ENCODE measurements at regions of chr6 and their contacts with region 1.

Region 1: DNA sequence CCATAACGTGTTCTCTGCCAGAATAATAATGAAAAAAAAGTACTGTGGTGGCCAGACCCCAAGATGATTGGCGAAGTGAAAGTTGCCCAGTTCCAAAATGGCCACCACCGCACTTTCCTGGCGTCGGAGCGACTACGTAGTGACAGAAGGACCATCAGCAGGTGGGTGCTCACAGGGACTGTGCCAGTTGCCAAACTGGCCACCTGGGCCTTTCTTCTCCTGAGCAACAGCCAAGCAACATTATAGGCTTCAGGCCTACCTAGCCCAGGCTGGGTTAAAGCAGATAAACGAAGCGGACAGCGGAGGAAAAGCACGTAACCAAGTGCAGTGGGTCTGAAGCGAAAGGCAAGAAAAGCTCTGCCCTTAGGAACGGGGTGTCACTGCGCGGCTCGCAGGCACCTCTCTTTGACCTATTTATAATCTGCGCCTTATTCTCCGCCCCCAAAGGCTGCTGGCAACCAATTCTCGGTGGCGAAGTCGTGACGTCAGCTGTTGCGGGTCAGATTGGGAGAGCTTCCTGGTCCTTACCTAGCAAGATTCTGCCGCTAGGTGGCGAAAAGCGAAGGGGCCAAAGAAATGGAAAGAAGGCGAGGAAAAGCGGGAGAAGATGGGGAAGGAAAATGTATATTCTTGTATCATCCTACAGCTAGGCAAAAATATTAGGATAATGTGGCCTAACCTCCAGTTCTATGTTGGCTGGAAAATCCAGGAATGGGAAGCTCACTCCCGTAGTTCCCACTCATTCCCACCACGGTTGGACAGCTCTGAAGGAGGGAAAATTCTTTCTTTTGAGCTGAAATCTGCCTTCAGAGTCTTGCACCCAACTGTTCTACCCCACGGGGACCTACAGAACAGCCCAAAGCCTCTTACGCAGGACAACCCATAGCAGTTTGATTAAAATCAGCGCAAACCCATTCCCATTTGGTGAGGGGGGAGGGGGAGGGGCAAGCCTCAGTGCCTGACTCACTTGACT is 6.9 kb upstream of the MOG start:
- DNase-seq: peak; percentile 92 to 99
- H3K4me3 ChIP-seq: peak overlapping the region; percentile 55 to 67
- H3K27ac ChIP-seq: peak overlapping the region; percentile 94 to 95
- H3K4me1 ChIP-seq: peaks cover 0 to 2% of the 10 kb centered on the region in 2 donors
- H3K27me3 ChIP-seq: no peaks in the 10 kb centered on the region
- CTCF ChIP-seq: peak; percentile 76 to 92 (median 85)

Region 2: GRCh38 chr6:29632789-29633533 is 17.0 kb before region 1 on chr6 and contains the start of gene GABBR1:
- intact Hi-C with region 1: loop called (anchors 1 kb)
- DNase-seq: peak; percentile 42 to 94
- H3K4me3 ChIP-seq: peak within 1 kb of the TSS; percentile 77 to 81
- H3K27ac ChIP-seq: peak within 1 kb of the TSS; percentile 79 to 81
- H3K4me1 ChIP-seq: peaks cover 8 to 17% of the 10 kb centered on the region in 2 donors
- H3K27me3 ChIP-seq: no peaks in the 10 kb centered on the region
- CTCF ChIP-seq: no peak
- total RNA-seq, gene GABBR1: 166 TPM

Region 3: GRCh38 chr6:29685718-29686326 is 35.8 kb after region 1 on chr6:
- intact Hi-C with region 1: loop called (anchors 2 kb)
- DNase-seq: no peak
- H3K4me3 ChIP-seq: no peak overlapping the region
- H3K27ac ChIP-seq: no peak overlapping the region
- H3K4me1 ChIP-seq: no peaks in the 10 kb centered on the region
- H3K27me3 ChIP-seq: no peaks in the 10 kb centered on the region
- CTCF ChIP-seq: peak in 1 of 3 experiments; percentile 32

Region 4: DNA sequence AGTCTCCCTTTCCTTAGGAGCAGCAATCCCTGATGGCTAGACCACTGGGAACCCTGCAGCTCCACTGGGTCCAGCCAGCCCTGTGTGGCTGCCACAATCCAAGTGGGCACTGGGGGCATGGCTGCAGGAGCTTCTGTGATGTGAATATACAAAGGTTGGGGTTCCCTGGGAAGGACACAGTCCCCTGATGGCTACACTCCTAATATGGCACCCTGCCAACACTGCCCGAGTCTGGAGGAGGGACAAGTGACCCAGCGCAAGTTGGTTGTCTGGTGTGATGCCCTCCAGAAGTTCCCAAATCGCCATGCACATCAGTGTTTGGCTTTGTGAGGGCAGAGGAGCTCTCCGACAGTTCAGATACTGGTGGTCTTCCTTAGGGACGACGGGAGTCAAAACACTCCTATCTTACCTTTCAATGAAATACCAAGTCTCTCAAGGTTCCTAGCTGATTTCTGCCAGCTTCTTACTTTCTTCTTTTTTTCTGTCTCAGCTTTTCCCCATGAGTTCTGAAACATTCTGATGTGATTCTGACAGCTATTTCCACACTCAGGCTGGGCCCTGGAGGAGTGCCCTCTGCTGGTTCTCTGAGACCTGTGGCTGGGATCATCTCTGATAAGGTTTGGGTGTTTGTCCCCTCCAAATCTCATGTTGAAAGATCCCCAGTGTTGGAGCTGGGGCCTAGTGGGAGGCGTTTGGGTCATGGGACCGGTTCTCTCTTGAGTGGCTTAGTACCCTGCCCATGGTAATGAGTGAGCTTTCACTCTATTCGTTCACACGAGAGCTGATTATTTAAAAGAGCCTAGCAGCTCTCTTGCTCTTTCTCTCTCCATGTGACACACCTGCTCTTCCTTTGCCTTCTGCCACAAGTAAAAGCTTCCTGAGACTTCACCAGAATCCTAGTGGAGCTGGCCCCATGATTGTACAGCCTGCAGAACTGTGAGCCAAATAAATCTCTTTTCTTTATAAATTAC is 46.5 kb after region 1 on chr6:
- intact Hi-C with region 1: loop called (anchors 2 kb)
- DNase-seq: no peak
- H3K4me3 ChIP-seq: no peak overlapping the region
- H3K27ac ChIP-seq: no peak overlapping the region
- H3K4me1 ChIP-seq: no peaks in the 10 kb centered on the region
- H3K27me3 ChIP-seq: no peaks in the 10 kb centered on the region
- CTCF ChIP-seq: peak in 2 of 3 experiments; percentile 12 to 42

Region 5: DNA sequence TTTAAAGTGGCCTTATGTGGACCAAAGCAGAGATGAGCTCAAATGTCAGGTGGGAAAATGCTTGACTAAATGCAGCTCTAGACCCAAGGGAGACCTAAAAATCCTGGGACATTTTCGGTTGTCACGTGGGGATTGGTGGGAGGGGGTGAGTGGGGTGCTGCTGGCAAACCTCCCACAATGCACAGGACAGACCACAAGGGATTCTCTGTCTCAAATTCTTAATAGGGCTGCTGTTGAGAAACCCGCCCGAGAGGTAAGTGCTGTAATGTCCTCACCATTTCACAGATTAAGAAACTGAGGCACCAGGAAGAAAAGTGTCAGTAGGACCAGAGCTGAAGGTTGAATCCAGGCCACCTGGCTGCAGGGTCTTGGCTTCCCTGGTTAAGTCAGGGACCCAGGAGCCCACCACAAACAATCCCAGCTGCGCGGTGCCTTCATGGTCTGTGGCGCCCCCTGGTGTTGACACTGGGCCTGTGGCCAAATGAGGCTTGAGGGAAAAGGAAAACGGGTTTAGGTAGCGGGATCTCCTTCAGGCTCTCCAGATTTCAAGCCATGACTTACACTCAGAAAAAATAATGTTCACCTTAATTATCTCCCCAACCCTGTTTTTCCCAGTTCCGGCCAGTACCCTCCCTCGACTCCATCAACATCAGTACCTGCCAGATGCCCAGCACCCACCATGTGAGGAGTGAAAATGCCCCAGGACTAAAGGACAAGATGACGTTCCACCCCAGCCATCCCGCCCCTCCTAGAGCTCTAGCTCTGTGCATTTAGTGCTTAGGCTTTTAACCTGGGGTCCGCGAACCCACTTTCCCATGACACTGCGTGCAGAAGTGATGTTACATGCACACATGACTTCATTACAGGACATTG is 184.8 kb after region 1 on chr6:
- intact Hi-C with region 1: loop called (anchors 5 kb)
- DNase-seq: no peak
- H3K4me3 ChIP-seq: no peak overlapping the region
- H3K27ac ChIP-seq: no peak overlapping the region
- H3K4me1 ChIP-seq: no peaks in the 10 kb centered on the region
- H3K27me3 ChIP-seq: no peaks in the 10 kb centered on the region
- CTCF ChIP-seq: peak; percentile 35 to 82 (median 81)

Region 6: GRCh38 chr6:29926413-29927274 is 276.7 kb after region 1 on chr6:
- intact Hi-C with region 1: loop called (anchors 5 kb)
- DNase-seq: peak in 1 of 2 donors; percentile 82
- H3K4me3 ChIP-seq: peak overlapping the region in 1 of 2 donors; percentile 66
- H3K27ac ChIP-seq: peak overlapping the region in 1 of 2 donors; percentile 79
- H3K4me1 ChIP-seq: no peaks in the 10 kb centered on the region
- H3K27me3 ChIP-seq: no peaks in the 10 kb centered on the region
- CTCF ChIP-seq: no peak